PC-3 (cell line): ENCODE measurements at regions of chr3 and their contacts with region 1.

Region 1: DNA sequence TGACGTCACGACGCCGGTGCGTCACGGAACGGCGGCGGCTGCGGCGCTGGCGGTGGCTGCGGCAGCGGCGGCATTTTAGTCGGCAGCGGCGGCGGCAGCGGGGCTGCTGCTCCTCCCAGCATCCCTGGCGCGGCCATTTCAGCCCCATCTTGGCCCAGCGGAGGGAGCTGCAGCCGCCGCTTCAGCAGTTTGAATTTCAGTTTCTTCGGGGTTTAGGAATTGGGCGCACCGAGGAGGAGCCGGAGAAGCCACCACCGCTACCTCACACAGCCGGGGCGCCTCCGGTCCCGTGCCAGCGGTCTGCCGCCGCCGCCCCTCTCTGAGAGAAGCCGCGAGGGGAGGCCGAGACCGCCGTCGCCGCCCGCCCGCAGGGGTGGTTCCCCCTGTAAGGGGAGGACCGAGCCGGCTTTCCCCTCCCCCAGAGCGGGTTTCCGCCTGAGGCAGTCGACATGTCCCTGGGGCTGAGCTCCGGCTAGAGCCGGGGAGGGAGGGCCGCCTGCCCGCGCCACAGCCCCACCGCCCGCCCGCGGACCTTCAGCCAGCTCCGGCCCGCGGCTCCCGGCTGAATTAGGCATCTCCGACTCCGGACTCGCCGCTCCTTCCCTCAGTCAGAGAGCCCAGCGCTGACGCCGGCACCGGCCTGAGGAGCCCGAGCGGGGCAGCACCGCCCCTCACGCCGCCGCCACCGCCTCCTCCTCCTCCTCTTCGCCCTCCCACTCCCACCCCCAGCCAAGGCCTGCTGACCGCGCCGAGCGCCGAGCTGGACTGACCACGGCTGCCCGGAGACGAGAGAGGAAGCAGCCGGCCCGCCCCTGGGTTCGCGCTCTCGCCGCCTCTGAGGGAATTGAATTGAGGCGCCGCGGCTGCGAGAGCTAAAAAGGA is at the start of gene TSC22D2:
- DNase-seq: peak; percentile 95
- ATAC-seq: peak; percentile 64
- H3K4me3 ChIP-seq: peak within 1 kb of the TSS; percentile 87
- H3K27ac ChIP-seq: peak within 1 kb of the TSS; percentile 91
- H3K4me1 ChIP-seq: peaks cover 19% of the 10 kb centered on the region
- H3K27me3 ChIP-seq: no peaks in the 10 kb centered on the region
- CTCF ChIP-seq: peak; percentile 39; the same call in 1 of the 2 replicates
- total RNA-seq, gene TSC22D2: 9.6 and 15.7 TPM in 2 replicates

Region 2: DNA sequence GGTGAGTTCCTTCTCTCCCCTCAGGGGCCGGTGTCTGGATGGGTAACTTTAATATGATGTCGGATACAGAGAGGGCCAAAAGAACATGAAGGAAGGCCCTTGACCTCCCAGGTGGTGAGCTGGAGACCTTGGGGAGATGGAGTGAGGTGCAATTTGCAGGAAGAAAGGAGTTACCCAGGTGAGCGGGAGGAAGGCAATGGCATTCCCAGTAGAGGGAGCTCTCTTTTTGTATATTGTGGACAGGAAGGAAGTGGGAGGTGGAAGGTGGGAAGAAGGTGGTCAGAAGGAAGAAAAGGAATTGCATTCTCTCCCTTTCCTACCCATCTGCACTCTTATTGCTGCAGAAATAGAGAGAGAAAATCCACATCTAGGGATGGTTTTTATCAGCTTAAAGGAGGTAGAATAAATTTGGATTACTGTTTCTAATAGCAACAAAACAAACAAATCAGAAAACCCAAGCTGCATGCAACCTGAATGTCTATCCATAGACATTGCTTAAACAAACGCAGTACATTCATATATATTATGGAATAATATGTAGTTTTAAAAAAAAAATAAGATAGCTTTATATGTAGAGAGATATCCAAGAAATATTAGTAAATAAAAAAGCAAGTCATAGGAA is 169.4 kb before region 1 on chr3:
- CTCF ChIA-PET with region 1: interaction called, 11 read pairs
- POLR2A ChIA-PET with region 1: interaction called, 15 read pairs
- intact Hi-C with region 1: loop called (anchors 1 kb)
- DNase-seq: peak; percentile 77
- ATAC-seq: peak; percentile 40
- H3K4me3 ChIP-seq: peak overlapping the region; percentile 61
- H3K27ac ChIP-seq: peak overlapping the region; percentile 95
- H3K4me1 ChIP-seq: peaks cover 46% of the 10 kb centered on the region
- H3K27me3 ChIP-seq: no peaks in the 10 kb centered on the region
- CTCF ChIP-seq: peak; percentile 96

Region 3: DNA sequence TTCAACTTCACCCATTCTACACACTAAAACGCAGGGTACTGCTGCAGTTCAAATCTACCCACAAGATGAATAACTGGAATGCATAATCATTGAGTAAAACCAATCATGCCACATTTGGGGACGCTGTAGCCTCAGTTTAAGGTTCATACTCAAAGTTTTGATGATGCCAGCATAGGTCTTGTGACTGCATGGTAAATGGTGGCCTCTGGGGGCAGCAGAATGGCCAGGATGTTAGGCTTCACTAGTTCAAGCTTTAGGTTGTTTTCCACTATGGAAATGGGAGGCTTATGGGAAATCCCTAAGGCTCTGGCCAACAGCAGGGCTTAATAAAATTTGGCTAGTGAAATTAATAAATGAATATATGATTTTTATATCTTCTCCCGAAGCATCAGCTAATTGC is 104.7 kb before region 1 on chr3:
- CTCF ChIA-PET with region 1: no interaction called
- POLR2A ChIA-PET with region 1: no interaction called
- intact Hi-C with region 1: loop called (anchors 5 kb)
- DNase-seq: peak; percentile 44
- ATAC-seq: no peak
- H3K4me3 ChIP-seq: no peak overlapping the region
- H3K27ac ChIP-seq: no peak overlapping the region
- H3K4me1 ChIP-seq: peaks cover 41% of the 10 kb centered on the region
- H3K27me3 ChIP-seq: no peaks in the 10 kb centered on the region
- CTCF ChIP-seq: peak; percentile 70

Region 4: DNA sequence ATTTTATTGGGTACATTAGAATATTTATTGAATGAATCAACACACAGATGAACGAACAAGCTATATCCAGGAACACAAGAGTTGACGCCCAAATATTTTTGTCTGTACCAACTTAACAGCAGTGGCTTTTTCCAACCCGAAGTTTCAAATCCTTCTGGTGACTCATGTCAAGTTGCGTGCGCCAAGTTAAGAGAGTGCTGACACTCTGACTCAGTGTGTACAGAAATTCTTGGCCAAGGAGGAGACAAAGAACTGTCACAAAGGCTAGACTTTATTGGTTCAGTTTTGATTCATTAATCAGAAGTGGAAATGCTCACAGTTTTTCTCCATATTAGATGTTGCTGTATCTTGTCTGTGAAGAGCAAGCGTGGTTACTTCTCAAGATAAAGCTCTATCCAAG is 60.0 kb before region 1 on chr3:
- CTCF ChIA-PET with region 1: no interaction called
- POLR2A ChIA-PET with region 1: interaction called, 6 read pairs
- intact Hi-C with region 1: loop called (anchors 1 kb)
- DNase-seq: peak; percentile 96
- ATAC-seq: peak; percentile 78
- H3K4me3 ChIP-seq: peak overlapping the region; percentile 53
- H3K27ac ChIP-seq: peak overlapping the region; percentile 83
- H3K4me1 ChIP-seq: peaks cover 72% of the 10 kb centered on the region
- H3K27me3 ChIP-seq: no peaks in the 10 kb centered on the region
- CTCF ChIP-seq: no peak

Region 5: DNA sequence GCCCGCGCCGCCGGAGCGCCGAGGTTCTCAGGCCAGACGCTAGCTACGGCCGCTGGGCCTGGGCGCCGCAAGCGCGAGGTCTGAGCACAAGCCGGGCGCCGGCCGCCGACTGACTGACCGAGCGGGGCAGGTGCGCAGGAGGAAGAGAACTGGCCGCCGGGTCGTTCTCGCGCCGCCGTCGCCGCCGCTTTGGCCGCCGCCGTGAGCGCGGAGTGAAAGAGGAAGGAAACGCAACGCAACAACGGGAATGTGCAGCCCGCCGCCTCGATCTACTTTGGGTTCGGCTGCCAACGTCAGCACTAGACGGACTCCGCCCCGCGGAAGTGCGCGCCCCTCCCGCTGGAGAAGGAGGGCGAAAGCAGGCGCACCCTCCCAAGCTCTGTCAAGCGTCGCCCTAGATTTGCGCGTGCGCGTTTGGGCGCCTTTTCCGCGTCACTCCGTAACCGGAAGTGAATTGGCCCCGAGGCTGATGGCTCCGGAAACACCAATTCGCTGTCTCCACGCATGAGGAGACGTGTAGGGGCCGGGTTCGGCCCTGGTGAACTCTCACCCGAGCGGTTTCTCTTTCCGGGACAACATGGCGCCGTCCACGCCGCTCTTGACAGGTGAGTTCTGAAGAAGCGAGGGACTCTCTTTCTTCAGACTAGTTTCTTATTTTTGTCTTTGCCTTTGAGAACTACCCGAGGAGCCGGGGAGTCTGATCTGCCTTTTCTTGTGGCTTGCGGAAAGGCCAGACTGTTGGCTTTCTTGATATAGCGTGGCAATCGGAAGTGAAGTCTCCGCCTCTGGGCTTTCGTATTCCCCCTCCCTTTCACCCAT is 138.0 kb after region 1 on chr3 and contains the starts of genes EIF2A and SERP1:
- CTCF ChIA-PET with region 1: interaction called, 3 read pairs
- POLR2A ChIA-PET with region 1: interaction called, 17 read pairs
- intact Hi-C with region 1: loop called (anchors 5 kb)
- DNase-seq: peak; percentile 100
- ATAC-seq: peak; percentile 90
- H3K4me3 ChIP-seq: peak within 1 kb of the TSS; percentile 77
- H3K27ac ChIP-seq: peak within 1 kb of the TSS; percentile 83
- H3K4me1 ChIP-seq: peaks cover 33% of the 10 kb centered on the region
- H3K27me3 ChIP-seq: no peaks in the 10 kb centered on the region
- CTCF ChIP-seq: no peak
- total RNA-seq, gene EIF2A: 67.9 and 92.4 TPM in 2 replicates
- total RNA-seq, gene SERP1: 439 and 552 TPM in 2 replicates